Activated CD8-positive, alpha-beta memory T cell treated with anti-CD3 and anti-CD28 coated beads, Interleukin-2, amount 10 ng/mL, durations not matched to agents 7 days and 5 days (primary cell): ENCODE measurements at regions of chr2 and their contacts with region 1.

Region 1: DNA sequence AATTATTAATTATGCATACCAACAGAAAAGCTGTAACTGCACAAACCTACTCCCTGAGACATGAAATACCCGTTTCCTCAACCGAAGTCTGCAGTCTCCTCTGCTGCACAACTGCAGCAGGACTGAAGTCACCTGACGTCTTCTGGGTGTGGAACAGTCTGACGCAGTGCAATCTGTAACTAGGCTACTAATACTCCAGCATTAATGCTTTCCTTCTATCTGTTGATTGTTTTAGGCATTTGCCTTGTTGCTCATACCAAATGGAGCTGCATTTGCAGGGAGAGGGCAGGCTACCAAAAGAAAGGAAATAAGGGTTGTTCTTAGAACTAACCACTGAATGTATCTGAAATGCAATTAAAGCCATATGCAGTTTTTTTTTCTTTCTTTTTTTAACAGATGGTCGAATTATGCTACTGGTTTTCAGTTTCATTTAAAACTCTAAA is 40.1 kb downstream of the RTN4 start:
- DNase-seq: peak; percentile 70
- ATAC-seq: peak; percentile 98
- H3K4me3 Mint-ChIP-seq: peak overlapping the region; percentile 83
- H3K27ac Mint-ChIP-seq: peak overlapping the region; percentile 90
- H3K4me1 Mint-ChIP-seq: peaks cover 57% of the 10 kb centered on the region
- H3K27me3 Mint-ChIP-seq: no peaks in the 10 kb centered on the region

Region 2: DNA sequence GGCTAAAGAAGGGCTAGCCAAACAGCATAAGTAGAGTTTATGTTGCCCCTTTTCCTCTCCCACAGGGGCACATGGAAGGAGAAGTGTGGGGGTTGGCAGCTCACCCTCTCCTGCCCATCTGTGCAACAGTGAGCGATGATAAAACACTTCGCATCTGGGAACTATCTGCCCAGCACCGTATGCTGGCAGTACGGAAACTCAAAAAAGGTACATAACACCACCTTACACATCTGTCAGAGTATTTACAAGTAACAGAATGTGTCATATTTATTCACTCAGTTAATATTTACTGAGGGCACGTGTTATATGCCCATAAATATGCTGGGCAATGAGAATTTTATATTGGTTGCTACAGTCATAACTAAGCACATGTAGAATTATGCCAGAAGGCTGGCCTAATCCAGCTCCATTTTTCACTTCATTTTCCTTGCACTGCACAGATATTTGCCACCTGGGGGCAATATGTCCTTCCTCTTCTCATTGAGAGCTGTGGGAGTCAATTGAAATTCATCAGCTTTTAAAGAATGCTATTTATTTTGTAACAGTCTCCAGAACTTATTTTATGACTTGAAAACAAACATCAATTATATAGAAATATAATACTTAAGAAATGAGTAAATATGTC is 110.5 kb before region 1 on chr2:
- CTCF ChIA-PET with region 1: interaction called, 10 read pairs
- DNase-seq: no peak
- ATAC-seq: no peak
- H3K4me3 Mint-ChIP-seq: no peak overlapping the region
- H3K27ac Mint-ChIP-seq: no peak overlapping the region
- H3K4me1 Mint-ChIP-seq: peaks cover 16% of the 10 kb centered on the region
- H3K27me3 Mint-ChIP-seq: no peaks in the 10 kb centered on the region

Region 3: DNA sequence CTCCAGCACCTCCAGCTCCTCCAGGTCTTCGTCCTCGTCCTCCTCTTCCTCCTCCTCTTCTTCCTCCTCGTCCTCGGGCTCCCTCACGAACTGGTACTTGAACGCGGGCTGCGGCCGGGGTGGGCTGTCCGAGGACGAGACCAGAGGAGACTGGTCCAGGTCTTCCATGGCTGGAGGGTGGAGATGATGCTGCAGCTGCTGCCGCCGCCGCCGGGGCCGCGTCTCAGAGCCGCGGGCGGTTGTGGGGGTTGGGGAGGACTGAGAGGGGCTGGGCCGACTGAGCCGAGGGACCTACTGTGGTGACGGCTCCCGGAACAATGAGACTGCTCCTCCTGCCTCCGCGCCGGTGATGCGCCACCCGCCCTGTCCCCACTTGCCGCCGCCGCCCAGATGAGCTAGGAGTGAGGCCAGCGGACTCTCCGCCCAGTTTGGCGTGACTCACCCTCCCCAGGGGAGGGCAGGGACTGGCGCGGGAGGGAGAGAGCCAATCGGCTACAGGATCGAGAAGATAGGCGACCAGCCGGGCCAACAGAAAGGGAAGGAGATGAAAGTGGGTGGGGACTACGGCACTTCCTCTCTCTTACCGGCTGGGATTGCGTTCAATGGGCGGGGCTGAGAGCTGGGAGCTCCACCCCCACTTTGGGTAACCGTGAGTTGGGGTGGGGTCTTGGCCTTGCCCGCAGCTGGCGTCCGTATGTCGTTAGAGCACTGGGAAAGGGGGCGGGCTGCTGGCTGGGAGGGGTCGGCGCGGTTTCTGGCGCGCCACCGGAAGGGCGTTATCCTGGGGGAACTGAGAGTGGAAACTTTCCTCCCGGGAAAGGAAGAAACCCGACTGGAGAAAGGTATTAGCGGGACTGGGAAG is 40.2 kb after region 1 on chr2 and contains the start of gene RTN4:
- CTCF ChIA-PET with region 1: interaction called, 10 read pairs
- DNase-seq: peak; percentile 100
- ATAC-seq: peak; percentile 92
- H3K4me3 Mint-ChIP-seq: peak within 1 kb of the TSS; percentile 93
- H3K27ac Mint-ChIP-seq: peak within 1 kb of the TSS; percentile 98
- H3K4me1 Mint-ChIP-seq: peaks cover 55% of the 10 kb centered on the region
- H3K27me3 Mint-ChIP-seq: no peaks in the 10 kb centered on the region
- total RNA-seq, gene RTN4: 71.6 to 88.0 TPM

Region 4: GRCh38 chr2:55168221-55169154 is 158.3 kb after region 1 on chr2:
- CTCF ChIA-PET with region 1: interaction called, 12 read pairs
- DNase-seq: no peak
- ATAC-seq: peak; percentile 53
- H3K4me3 Mint-ChIP-seq: no peak overlapping the region
- H3K27ac Mint-ChIP-seq: no peak overlapping the region
- H3K4me1 Mint-ChIP-seq: no peaks in the 10 kb centered on the region
- H3K27me3 Mint-ChIP-seq: no peaks in the 10 kb centered on the region